A673 (cell line): ENCODE measurements at regions of chr5 and their contacts with region 1.

Region 1: DNA sequence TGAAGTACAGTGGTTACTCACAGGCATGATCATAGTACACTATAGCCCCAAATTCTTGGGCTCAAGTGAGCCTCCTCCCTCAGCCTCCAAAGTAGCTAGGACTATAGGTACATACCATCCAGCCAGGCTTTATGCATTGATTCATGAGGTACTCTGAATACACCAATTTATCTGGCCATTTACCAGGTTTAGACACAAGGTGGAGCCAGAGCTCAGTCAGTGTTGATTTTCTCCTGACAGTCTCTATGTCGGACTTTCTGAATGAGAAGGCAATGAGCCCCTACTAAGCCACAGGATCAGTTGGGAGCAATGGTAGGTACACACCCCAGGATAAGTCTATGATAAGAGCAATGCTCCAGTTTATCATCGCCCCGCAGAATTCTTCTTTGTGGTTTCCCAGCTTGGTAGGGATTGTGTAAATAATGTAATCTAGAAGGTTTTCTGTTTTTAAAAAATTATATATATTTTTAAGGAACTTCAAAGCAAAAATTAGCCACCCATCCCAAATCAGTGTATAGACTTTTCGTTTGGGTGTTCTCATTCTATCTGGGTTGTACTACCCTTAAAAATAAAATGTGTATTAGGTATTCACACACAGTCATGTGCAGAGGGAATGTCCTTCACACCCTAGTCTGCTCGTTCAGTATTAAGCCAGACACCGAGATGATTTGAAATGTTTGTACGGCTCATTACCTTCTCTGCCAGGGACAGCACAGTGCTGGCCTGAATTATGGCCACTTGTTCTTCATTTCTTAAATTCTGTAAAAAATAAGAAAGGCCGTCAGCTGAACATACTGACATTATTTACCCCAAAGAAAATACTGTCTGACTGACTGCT is 118.4 kb upstream of the DPYSL3 start:
- DNase-seq: peak; percentile 95
- H3K4me3 ChIP-seq: peak overlapping the region; percentile 28
- H3K27ac ChIP-seq: peak overlapping the region; percentile 81
- H3K4me1 ChIP-seq: peaks cover 72% of the 10 kb centered on the region
- H3K27me3 ChIP-seq: no peaks in the 10 kb centered on the region
- CTCF ChIP-seq: peak; percentile 89

Region 2: DNA sequence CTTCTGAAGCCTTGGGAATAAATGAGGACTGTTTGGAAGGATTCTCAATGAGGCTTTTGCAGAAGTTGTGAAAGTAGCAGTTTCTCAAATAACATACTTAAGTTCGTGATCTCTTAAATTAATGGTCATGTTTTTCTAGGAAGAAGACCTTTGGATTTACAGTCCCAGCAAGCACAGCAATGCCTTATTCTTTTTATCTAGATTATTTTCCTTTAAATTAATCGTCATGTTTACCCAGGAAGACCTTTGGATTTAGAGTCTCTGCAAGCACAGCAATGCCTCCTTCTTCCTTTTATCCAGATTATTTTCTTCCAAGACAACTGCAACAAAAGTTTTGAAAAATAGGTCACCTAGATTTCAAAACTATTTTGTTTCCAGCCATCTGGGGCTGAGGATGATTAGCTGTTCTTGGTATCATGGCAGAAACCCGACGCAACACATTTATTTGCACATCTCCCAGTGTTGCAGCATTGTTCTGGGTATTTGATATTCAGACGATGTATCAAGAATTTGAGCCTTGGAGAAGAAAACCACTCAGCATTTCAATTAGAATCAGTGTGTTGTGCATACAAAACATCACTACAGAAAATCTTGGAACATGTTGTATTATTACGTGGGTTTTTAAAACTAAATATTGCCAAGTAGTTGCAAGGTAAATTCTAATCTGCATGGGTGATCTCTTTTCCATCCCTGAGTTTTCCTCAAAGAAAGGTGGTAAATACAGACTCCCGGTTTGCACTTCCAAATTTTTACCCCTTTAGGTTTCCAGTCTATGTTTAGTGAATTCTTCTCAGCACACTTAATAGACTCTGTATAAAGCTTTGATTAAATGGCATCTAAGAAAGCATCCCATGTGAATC is 103.4 kb after region 1 on chr5:
- CTCF ChIA-PET with region 1: interaction called, 6 read pairs
- POLR2A ChIA-PET with region 1: no interaction called
- intact Hi-C with region 1: loop called (anchors 1 kb)
- DNase-seq: no peak
- H3K4me3 ChIP-seq: no peak overlapping the region
- H3K27ac ChIP-seq: no peak overlapping the region
- H3K4me1 ChIP-seq: peaks cover 19% of the 10 kb centered on the region
- H3K27me3 ChIP-seq: no peaks in the 10 kb centered on the region
- CTCF ChIP-seq: no peak

Region 3: GRCh38 chr5:147743678-147744374 is 115.5 kb after region 1 on chr5:
- CTCF ChIA-PET with region 1: interaction called, 9 read pairs
- POLR2A ChIA-PET with region 1: interaction called, 3 read pairs
- intact Hi-C with region 1: loop called (anchors 1 kb)
- DNase-seq: peak; percentile 99
- H3K4me3 ChIP-seq: no peak overlapping the region
- H3K27ac ChIP-seq: peak overlapping the region; percentile 97
- H3K4me1 ChIP-seq: peaks cover 91% of the 10 kb centered on the region
- H3K27me3 ChIP-seq: no peaks in the 10 kb centered on the region
- CTCF ChIP-seq: peak; percentile 21; the same call in 1 of the 2 replicates

Region 4: DNA sequence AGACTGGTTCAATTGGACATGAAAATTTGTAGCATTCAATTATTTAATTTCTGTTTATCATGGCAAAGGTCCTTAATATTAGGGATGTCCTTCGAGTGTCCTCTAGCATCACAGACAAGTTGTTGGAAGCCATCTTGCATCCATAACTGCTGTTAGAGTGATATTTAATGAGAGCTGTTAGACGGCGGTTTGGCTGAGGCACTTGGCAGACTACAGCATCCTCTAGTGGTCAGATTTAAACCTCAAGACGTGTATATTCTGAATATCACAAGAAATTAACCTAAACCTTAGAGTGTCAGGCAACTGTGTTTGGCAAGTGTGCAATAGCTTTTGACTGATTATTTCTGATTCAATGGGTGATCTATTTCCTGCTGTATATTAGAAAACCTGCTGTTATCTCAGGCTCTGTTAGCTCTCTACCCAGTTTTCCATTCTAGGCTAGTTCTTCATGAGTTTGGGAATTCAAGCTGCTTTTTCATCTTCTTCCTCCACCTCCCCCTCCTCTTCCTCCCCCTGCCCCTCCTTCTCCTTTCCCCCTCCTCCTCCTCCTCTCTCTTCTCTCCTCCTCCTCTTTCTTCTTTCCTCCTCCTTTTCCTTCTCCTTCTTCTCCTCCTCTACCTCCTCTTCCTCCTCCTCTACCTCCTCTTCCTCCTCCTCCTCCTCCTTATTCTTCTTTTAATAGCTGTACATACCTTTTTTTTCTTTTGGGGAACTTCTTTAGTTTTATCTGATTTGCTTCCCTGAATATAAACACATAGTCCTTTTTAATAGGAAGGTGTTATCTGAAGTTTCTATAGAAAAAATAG is 194.6 kb after region 1 on chr5:
- CTCF ChIA-PET with region 1: interaction called, 24 read pairs
- POLR2A ChIA-PET with region 1: no interaction called
- intact Hi-C with region 1: loop called (anchors 1 kb)
- DNase-seq: peak; percentile 95
- H3K4me3 ChIP-seq: no peak overlapping the region
- H3K27ac ChIP-seq: peak overlapping the region; percentile 55
- H3K4me1 ChIP-seq: peaks cover 53% of the 10 kb centered on the region
- H3K27me3 ChIP-seq: no peaks in the 10 kb centered on the region
- CTCF ChIP-seq: peak; percentile 96

Region 5: DNA sequence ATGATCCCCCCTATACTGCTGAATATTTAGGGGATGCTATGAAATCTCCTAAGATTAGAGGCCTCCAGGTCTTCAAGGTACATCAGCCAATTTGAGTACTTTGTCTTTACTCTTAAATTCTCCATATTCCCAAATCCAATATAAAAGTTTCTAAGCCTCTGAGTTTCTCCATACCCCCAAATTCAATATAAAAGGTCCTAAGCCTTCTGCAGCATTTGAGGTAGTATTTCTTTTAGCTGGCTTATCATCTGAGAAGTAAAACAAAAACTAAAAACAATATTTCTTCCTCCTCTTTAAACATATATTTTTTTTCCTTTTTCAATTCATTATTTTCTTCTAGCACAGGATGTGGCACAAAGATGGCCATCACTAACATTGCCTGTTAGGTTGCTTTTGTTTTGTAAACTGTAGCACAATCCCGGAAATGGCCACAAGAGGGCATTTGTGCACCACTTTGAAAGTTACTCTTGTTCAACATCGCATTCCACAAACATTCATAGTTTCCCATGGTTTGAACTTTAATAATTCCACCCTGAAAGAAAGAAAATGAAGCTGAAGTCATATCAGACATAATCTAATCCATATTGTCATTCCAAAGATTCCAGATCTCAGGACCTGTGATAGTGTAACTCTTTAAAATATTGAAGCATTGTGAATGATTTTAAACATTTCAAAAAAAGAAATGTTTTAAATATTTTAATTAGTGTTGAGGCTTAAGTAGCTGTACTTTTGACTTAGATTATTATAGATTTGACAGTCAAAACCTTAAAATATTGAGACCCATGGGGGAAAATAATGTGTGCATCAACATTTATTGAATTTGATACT is 229.2 kb after region 1 on chr5:
- CTCF ChIA-PET with region 1: no interaction called
- POLR2A ChIA-PET with region 1: no interaction called
- intact Hi-C with region 1: loop called (anchors 1 kb)
- DNase-seq: peak; percentile 81
- H3K4me3 ChIP-seq: no peak overlapping the region
- H3K27ac ChIP-seq: no peak overlapping the region
- H3K4me1 ChIP-seq: peaks cover 9% of the 10 kb centered on the region
- H3K27me3 ChIP-seq: no peaks in the 10 kb centered on the region
- CTCF ChIP-seq: peak; percentile 91

Region 6: DNA sequence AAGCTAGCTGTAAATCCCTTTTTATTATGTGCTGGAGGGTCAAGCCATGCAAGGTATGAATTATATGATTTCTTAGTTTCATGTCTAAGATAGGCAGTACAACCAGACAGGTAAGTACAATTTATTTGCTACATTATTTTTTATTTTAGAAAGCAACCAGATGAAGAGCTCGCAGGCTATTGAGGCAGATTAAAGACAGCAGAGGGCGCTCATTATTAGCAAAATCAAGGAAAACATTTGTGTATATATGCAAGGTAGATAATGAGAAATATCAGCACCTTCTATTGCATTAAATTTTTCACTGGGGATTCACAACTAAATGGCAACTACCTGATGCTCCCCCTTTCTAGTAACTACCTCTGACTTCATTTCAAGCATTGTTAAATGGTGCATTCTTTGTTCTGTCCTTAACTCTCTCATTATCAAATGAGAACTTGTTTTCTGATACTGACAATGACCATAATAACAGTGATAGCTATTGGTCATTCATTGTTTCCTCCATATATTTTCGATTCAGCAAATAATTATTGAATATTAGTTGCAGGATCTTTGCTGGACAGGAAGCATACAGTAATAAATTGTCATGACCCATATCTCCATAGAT is 258.8 kb after region 1 on chr5:
- CTCF ChIA-PET with region 1: interaction called, 10 read pairs
- POLR2A ChIA-PET with region 1: no interaction called
- intact Hi-C with region 1: no loop called
- DNase-seq: peak; percentile 47
- H3K4me3 ChIP-seq: no peak overlapping the region
- H3K27ac ChIP-seq: no peak overlapping the region
- H3K4me1 ChIP-seq: no peaks in the 10 kb centered on the region
- H3K27me3 ChIP-seq: peaks cover 7% of the 10 kb centered on the region
- CTCF ChIP-seq: peak; percentile 79

Region 7: GRCh38 chr5:147935032-147935431 is 306.8 kb after region 1 on chr5:
- CTCF ChIA-PET with region 1: no interaction called
- POLR2A ChIA-PET with region 1: no interaction called
- intact Hi-C with region 1: loop called (anchors 5 kb)
- DNase-seq: peak; percentile 82
- H3K4me3 ChIP-seq: no peak overlapping the region
- H3K27ac ChIP-seq: no peak overlapping the region
- H3K4me1 ChIP-seq: no peaks in the 10 kb centered on the region
- H3K27me3 ChIP-seq: no peaks in the 10 kb centered on the region
- CTCF ChIP-seq: peak; percentile 71